Activated T-helper 1 cell treated with anti-CD3 and anti-CD28 coated beads, Interleukin-12 subunit alpha, Interleukin-12 subunit beta, Interleukin-2, Interleukin-4 antibody, amounts not matched to agents 30 ng/mL and 10 ng/mL and 1 ng/mL, durations not matched to agents 14 hours and 24 hours and 36 hours (primary cell): ENCODE measurements at regions of chr13 and their contacts with region 1.

Region 1: DNA sequence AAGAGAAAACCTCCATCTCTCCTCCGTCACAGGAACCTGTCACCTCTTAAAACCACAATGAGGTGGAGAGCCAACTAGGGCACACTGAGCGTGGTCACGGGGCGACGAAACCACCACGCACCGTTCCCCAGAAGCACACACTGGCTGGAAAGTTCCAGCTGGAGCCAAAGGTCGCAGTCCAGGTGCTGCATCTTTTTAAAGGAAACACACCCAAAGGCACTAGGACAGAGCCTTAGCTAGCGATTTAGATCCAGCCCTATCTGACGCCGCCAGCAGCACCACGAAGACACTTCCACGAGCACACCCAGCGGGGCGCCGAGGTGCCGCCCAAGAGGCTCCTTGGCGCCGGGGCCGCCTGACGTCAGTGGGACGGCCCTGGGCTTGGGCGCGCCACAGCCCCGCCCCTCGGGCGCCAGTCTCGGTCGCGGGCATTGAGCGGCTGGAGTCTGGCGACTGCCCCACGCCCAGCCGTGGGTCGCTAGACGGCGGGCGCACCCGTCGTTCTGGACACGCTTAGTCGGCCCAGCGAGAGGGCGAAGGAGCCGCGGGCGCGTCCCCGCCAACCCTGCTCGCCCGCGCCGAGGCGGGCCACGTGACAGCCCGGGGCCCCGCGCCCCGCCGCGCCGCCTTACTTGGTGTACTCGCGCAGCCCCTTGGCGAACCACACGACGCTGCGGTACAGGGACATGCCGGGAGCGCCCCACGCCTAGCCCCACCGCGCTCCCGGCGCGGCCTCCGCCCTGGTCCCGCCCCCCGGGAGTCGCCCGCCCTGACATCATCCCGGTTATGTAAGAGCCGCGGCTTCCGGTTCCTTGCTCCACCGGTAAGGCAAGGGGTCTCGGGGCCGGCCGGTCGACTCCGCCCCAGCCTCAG is at the start of gene DHRS12:
- DNase-seq: peak; percentile 79
- H3K4me3 Mint-ChIP-seq: peak within 1 kb of the TSS; percentile 90
- H3K27ac Mint-ChIP-seq: peak within 1 kb of the TSS; percentile 99
- H3K4me1 Mint-ChIP-seq: peaks cover 49% of the 10 kb centered on the region
- H3K27me3 Mint-ChIP-seq: no peaks in the 10 kb centered on the region
- total RNA-seq, gene DHRS12: 3.3 and 3.5 TPM in 2 replicates

Region 2: DNA sequence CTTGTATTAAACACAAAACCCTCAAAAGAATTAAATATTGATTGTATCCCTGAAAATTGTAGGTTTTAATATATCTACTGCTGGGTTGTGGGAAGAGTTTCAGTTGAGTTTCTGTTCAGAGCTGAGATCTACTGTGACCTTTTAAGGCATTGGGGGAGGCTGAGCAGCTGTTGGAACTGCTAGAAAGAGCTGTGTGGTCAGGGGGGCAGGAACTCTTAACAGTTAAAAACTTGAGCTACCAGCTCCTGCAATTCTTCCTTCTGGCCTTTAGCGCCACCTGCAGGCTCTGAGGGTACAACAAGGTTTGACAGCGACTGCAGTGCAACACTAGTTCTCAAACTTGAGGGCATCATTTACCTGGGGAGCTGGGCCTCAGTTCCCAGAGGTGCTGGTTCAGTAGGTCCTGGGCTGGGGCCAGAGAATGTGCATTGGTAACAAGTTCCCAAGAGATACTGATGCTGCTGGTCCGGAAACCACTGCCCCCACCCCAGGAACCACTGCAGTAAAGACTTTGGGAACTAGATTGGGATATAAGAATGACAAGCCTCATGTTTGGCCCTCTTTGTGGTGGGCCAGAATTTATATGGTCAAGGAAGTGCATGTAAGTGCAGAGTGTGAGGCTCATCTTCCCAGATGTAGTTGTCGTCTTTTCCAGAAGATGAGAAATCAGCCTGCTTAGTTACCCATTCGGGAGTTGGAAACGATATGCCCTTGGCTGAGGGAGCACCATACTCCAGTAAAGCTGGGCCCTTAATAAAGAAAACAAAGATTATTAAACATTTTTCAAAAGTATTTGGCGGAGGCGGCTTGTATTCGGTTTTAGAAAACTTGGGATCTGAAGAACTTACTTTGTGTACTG is 891.5 kb before region 1 on chr13:
- intact Hi-C with region 1: loop called (anchors 10 kb)
- DNase-seq: peak; percentile 87
- H3K4me3 Mint-ChIP-seq: peak overlapping the region; percentile 82
- H3K27ac Mint-ChIP-seq: peak overlapping the region; percentile 37
- H3K4me1 Mint-ChIP-seq: peaks cover 68% of the 10 kb centered on the region
- H3K27me3 Mint-ChIP-seq: no peaks in the 10 kb centered on the region

Region 3: DNA sequence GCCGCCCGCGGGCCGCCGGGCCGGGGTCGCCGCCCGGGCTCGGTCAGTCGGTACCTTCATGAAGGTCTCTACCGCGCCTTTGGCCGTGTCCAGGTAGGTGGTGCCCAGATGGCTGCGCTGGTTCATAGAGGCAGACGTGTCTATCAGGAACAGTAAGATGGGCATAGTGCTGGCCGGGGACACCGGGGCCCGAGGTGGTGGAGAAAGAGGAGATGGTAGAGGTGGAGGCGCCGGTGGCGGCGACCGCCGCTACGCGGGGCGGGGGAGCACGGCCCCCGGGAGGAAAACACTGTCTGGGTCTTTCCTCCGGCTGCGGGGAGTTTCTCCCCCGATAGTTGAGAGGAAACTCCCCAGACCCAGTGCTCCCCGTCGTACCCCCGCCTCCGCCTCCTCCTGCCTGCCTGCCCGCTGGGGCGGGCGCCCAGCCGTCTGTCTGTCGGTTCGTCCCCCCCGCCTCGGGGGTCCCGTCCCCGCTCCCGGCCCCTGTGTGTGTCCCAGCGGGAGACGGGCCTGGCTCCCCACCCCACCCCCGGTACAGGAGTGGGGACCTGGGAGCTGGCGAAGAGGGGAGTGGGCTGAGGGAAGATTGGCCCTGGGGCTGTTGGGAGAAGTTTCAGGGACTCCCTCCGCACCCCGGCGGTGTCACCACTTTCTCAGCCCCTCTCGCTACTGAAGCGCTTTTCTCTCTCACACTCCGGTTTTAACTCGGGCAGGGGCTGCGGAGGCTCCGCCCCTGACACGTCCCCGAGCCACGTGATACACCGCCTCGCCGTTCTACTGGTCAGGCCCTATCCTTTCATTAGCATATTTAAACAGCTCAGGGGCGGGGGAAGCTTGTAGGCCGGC is 351.1 kb before region 1 on chr13 and contains the start of gene INTS6:
- intact Hi-C with region 1: loop called (anchors 1 kb)
- DNase-seq: peak; percentile 99
- H3K4me3 Mint-ChIP-seq: peak within 1 kb of the TSS; percentile 92
- H3K27ac Mint-ChIP-seq: peak within 1 kb of the TSS; percentile 98
- H3K4me1 Mint-ChIP-seq: peaks cover 52% of the 10 kb centered on the region
- H3K27me3 Mint-ChIP-seq: no peaks in the 10 kb centered on the region
- total RNA-seq, gene INTS6: 76.6 and 81.7 TPM in 2 replicates

Region 4: DNA sequence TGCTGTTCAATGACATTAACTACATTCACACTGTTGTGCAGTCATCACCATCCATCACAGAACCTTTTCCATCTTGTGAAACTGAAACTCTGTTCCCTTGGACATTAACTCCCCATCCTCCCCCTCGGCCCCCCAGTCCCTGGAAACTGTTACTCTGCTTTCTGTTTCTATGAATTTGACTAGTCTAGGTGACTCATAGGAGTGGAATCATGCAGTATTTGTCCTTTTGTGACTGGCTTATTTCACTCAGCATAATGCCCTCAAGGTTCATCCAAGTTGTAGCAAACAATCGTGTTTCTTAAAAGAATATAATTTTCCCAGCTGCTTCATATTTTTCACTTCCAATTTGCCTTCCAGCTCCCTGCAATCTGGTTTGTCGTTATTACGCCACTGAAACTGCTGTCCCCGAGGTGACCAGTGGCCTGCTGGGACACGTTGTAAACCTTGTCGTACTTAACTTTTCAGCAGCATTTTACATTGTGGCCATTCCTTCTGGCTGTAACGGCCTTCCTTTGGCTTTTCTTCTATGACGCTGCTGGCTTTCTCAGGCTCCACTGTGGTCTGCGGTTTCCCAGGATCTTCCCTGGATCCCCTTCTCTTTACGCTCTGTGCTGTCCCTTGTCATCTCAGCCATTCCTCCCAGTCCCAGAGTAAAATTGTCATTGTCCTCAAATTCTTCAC is 73.7 kb before region 1 on chr13:
- intact Hi-C with region 1: loop called (anchors 2 kb)
- DNase-seq: no peak
- H3K4me3 Mint-ChIP-seq: no peak overlapping the region
- H3K27ac Mint-ChIP-seq: no peak overlapping the region
- H3K4me1 Mint-ChIP-seq: peaks cover 13% of the 10 kb centered on the region
- H3K27me3 Mint-ChIP-seq: no peaks in the 10 kb centered on the region

Region 5: GRCh38 chr13:51814825-51815650 is 11.4 kb after region 1 on chr13:
- intact Hi-C with region 1: loop called (anchors 1 kb)
- DNase-seq: peak; percentile 66
- H3K4me3 Mint-ChIP-seq: peak overlapping the region; percentile 37
- H3K27ac Mint-ChIP-seq: no peak overlapping the region
- H3K4me1 Mint-ChIP-seq: peaks cover 52% of the 10 kb centered on the region
- H3K27me3 Mint-ChIP-seq: peaks cover 3% of the 10 kb centered on the region

Region 6: DNA sequence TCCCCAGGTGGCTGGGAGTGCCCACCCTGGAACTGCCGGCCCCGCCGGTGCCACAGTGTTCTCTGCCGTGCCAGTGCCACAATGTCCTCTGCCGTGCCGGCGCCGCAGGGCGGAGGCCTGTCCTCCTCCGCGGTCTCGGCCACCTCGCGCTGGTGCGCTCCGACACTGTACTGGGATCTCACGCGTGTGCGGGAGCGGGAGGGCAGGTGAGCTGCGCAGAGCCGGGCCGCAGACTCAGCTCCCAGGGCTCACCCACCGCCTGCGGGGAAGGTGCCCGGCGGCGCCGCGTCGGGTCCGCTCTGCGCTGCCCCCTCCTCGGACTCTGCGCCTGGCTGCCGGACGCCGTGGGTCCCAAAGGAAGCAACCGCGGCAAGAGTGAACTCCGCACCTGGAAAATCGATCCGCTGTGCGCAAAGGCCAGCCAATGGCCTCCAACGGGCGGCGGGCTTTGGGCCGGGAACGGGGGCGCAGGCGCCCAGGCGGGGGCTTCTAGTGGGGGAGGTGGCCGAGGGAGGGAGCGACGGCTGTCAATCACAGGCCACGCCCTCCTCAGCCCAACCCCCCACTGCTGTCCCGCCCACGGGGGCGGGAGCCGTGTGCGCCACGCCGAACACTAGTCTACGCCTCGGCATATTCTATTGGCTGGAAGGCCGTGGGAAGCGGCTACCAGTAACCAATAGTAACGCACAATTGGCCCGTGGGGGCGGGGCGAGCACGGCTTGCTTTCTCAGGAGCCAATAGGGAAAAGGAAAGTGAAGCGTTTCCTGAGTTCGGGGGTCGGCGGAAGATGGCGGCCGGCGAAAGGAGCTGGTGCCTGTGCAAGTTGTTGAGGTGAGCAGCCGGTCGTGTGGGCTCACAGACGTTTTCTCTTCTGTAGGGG is 208.2 kb after region 1 on chr13 and contains the start of gene ALG11:
- intact Hi-C with region 1: loop called (anchors 1 kb)
- DNase-seq: peak; percentile 100
- H3K4me3 Mint-ChIP-seq: peak within 1 kb of the TSS; percentile 99
- H3K27ac Mint-ChIP-seq: peak within 1 kb of the TSS; percentile 88
- H3K4me1 Mint-ChIP-seq: peaks cover 13% of the 10 kb centered on the region
- H3K27me3 Mint-ChIP-seq: peaks cover 34% of the 10 kb centered on the region
- total RNA-seq, gene ALG11: 24.7 and 28.6 TPM in 2 replicates